ENCODE measurements at regions of chr19 and their contacts with region 1.

Region 1: DNA sequence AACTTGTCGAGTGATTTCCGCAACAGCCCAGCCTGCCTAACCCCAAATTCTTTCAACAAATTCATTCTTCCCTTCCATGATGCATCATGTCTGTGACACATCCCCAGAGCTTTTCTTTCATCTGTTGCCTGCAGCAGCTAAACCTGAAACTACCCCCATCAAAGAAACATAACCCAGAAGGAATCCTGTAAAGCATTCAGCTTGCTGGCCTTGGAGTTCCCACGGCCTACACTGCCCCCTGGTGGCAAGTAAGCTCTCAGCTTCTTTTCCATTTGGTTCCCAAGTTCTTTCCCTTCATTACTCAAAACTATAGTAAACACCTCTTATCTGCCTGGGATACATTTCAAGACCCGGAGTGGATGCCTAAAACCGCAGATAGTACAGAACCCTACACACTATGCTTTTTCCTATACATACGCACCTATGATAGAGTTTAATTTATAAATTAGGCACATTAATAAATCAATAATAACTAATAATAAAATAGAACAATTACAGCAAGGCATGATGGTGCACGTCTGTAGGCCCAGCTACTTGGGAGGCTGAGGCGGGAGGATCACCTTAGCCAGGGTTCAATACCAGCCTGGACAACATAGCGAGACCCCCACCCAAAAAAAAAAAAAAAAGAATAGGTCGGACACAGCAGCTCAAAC is 7.4 kb downstream of the ETHE1 start:
- DNase-seq: peak in 1 of 2 donors; percentile 58
- H3K4me3 ChIP-seq: no peak overlapping the region
- H3K27ac ChIP-seq: no peak overlapping the region
- H3K4me1 ChIP-seq: peaks cover 2 to 3% of the 10 kb centered on the region in 2 donors
- H3K27me3 ChIP-seq: no peaks in the 10 kb centered on the region
- CTCF ChIP-seq: peak; percentile 56 to 93 (median 92)
- POLR2A ChIP-seq: no peak

Region 2: GRCh38 chr19:43446746-43447489 is 72.6 kb before region 1 on chr19:
- intact Hi-C with region 1: no loop called
- DNase-seq: peak; percentile 65 to 82
- H3K4me3 ChIP-seq: no peak overlapping the region
- H3K27ac ChIP-seq: no peak overlapping the region
- H3K4me1 ChIP-seq: no peaks in the 10 kb centered on the region
- H3K27me3 ChIP-seq: no peaks in the 10 kb centered on the region
- CTCF ChIP-seq: peak; percentile 90 to 97 (median 95)
- POLR2A ChIP-seq: no peak

Region 3: GRCh38 chr19:43457809-43458208 is 61.8 kb before region 1 on chr19:
- intact Hi-C with region 1: loop called (anchors 5 kb)
- DNase-seq: no peak
- H3K4me3 ChIP-seq: no peak overlapping the region
- H3K27ac ChIP-seq: no peak overlapping the region
- H3K4me1 ChIP-seq: no peaks in the 10 kb centered on the region
- H3K27me3 ChIP-seq: no peaks in the 10 kb centered on the region
- CTCF ChIP-seq: no peak
- POLR2A ChIP-seq: no peak

Region 4: GRCh38 chr19:43595999-43596841 is 76.7 kb after region 1 on chr19 and contains the starts of genes IRGQ and ZNF576:
- intact Hi-C with region 1: no loop called
- DNase-seq: peak; percentile 100
- H3K4me3 ChIP-seq: peak within 1 kb of the TSS; percentile 66 to 75 (median 71)
- H3K27ac ChIP-seq: peak within 1 kb of the TSS; percentile 98
- H3K4me1 ChIP-seq: peaks cover 9 to 13% of the 10 kb centered on the region in 2 donors
- H3K27me3 ChIP-seq: no peaks in the 10 kb centered on the region
- CTCF ChIP-seq: peak in 2 of 3 donors; percentile 19 to 25
- POLR2A ChIP-seq: peak; percentile 75
- total RNA-seq, gene IRGQ: 14.9 to 17.4 (median 16.1) TPM
- total RNA-seq, gene ZNF576: 14.2 to 18.0 (median 14.8) TPM